Caco-2 (cell line): ENCODE measurements at regions of chr14 and their contacts with region 1.

Region 1: DNA sequence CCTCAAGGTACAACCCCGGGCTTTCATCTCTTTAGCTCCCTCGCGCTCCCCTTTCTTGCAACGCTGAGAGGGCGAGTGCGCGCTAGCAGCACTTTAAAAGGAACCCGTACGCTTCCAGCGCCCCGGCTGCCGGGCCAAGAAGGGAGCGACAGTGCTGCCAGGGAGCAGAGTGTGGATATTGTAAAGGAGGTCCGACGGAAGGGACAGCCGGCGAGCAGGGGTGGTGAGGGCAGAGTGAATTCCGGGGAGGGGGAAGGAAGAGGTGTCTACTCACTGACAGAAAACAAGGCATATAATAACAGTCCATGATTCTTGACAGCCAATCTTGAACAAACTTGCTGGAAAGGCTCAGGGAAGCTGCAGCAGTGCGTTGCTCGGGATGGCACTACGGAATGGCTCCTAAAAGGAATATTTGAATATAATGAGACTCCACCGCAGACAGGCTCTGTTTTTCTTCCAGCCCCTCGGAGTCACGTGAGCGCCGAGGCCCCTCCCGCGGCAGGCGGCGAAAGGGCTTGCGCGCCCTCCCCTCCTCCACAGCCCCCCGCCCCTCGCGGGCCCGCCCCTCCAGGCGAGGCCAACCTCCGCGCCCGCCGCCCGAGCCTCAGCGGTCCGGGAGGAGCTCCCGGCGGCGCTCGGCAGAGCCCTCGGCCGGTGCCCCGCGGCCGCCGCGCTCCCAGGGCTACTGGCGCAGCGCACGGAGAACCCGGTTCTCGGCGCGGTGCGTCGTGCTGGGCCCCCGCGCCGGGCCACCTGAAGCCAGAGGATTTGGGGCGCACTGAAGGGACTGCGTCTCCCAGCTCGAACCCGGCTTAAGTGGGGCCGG is 3.4 kb downstream of the BMP4 start:
- DNase-seq: peak; percentile 80 to 89
- H3K4me3 ChIP-seq: peak overlapping the region; percentile 51
- H3K4me3 Mint-ChIP-seq: peak overlapping the region; percentile 100
- H3K27ac Mint-ChIP-seq: peak overlapping the region; percentile 80
- H3K4me1 ChIP-seq: peaks cover 14% of the 10 kb centered on the region
- H3K4me1 Mint-ChIP-seq: peaks cover 10% of the 10 kb centered on the region
- H3K27me3 ChIP-seq: no peaks in the 10 kb centered on the region
- H3K27me3 Mint-ChIP-seq: no peaks in the 10 kb centered on the region
- CTCF ChIP-seq: no peak

Region 2: GRCh38 chr14:53444677-53445312 is 508.4 kb before region 1 on chr14:
- CTCF ChIA-PET with region 1: no interaction called
- POLR2A ChIA-PET with region 1: interaction called, 14 read pairs
- intact Hi-C with region 1: no loop called
- DNase-seq: no peak
- H3K4me3 ChIP-seq: no peak overlapping the region
- H3K4me3 Mint-ChIP-seq: no peak overlapping the region
- H3K27ac Mint-ChIP-seq: no peak overlapping the region
- H3K4me1 ChIP-seq: peaks cover 31% of the 10 kb centered on the region
- H3K4me1 Mint-ChIP-seq: peaks cover 37% of the 10 kb centered on the region
- H3K27me3 ChIP-seq: no peaks in the 10 kb centered on the region
- H3K27me3 Mint-ChIP-seq: no peaks in the 10 kb centered on the region
- CTCF ChIP-seq: no peak

Region 3: GRCh38 chr14:53478174-53478573 is 475.0 kb before region 1 on chr14:
- CTCF ChIA-PET with region 1: no interaction called
- POLR2A ChIA-PET with region 1: no interaction called
- intact Hi-C with region 1: no loop called
- DNase-seq: no peak
- H3K4me3 ChIP-seq: no peak overlapping the region
- H3K4me3 Mint-ChIP-seq: no peak overlapping the region
- H3K27ac Mint-ChIP-seq: no peak overlapping the region
- H3K4me1 ChIP-seq: no peaks in the 10 kb centered on the region
- H3K4me1 Mint-ChIP-seq: peaks cover 13% of the 10 kb centered on the region
- H3K27me3 ChIP-seq: no peaks in the 10 kb centered on the region
- H3K27me3 Mint-ChIP-seq: no peaks in the 10 kb centered on the region
- CTCF ChIP-seq: no peak

Region 4: DNA sequence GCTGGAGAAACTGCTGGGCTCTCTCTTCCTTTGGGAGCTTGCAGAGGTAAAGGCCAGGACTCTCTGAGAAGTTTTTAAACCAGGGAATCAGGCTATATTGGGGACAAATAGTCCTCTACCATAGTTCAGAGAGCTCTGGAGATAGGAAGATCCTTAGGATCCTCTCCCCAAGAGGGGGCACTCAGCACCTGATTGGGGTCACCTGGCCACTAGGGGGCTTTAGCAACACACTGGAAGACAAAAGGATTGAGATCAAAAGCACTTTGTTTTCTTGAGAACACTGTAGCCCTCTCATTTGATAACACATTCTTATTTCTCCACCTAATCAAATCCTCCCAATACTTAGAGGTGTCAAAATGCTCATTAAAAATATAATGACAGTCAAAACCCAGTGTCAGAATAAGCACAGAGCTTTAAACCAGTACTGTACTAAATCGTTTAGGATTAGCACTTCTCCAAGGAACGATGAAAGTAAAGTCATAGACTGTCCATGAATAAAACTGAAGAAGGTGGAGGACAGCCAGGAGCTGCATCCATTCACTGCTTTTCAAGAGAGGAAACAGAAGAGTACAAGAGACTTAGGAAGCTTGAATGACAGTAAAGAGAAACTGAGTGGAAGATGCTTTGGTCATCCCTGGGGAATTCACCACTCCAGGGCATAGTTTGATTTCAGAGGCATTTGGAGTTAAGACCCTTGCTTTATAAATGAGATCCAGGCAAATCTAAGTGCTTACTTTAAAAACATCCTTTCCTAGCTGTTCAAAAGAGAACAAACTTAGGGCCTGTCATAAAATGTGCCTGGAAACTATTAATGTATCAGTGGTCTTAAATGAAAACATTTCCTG is 23.1 kb before region 1 on chr14:
- CTCF ChIA-PET with region 1: interaction called, 9 read pairs
- POLR2A ChIA-PET with region 1: no interaction called
- intact Hi-C with region 1: loop called (anchors 1 kb)
- DNase-seq: peak; percentile 82 to 84
- H3K4me3 ChIP-seq: no peak overlapping the region
- H3K4me3 Mint-ChIP-seq: no peak overlapping the region
- H3K27ac Mint-ChIP-seq: peak overlapping the region; percentile 68
- H3K4me1 ChIP-seq: peaks cover 39% of the 10 kb centered on the region
- H3K4me1 Mint-ChIP-seq: peaks cover 37% of the 10 kb centered on the region
- H3K27me3 ChIP-seq: no peaks in the 10 kb centered on the region
- H3K27me3 Mint-ChIP-seq: no peaks in the 10 kb centered on the region
- CTCF ChIP-seq: peak; percentile 93 to 98

Region 5: DNA sequence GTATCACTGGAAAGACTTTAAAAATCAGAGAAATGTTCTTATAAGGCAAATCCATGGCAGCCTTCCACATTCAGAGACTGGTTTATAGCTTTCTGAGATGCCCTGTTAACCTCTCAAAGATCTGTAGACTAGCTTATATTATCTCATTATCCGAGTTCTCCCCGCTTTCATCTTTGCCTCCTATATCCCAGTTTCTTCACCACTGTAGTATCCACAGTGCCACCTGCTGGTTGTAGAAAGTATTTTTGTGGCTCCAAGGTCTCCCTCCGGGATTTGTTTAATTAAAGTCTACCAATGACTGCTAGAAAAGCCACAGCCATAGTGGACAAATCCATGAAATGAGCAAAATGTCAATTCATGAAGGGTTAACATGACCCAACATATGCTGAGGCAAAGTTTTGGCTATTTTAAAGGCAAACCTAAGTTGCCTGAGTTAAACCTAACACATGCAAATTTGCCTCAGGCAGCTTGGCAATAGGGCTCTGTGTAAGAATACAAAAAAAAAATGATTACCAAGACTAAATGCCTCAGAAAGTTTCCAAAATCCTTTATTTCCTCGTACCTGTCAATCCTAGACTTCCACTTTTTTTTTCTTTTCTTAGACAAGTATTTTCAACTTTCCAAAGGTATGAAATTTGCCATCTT is 222.2 kb after region 1 on chr14:
- CTCF ChIA-PET with region 1: interaction called, 8 read pairs
- POLR2A ChIA-PET with region 1: no interaction called
- intact Hi-C with region 1: loop called (anchors 1 kb)
- DNase-seq: peak; percentile 76 to 83
- H3K4me3 ChIP-seq: no peak overlapping the region
- H3K4me3 Mint-ChIP-seq: no peak overlapping the region
- H3K27ac Mint-ChIP-seq: no peak overlapping the region
- H3K4me1 ChIP-seq: peaks cover 47% of the 10 kb centered on the region
- H3K4me1 Mint-ChIP-seq: peaks cover 33% of the 10 kb centered on the region
- H3K27me3 ChIP-seq: no peaks in the 10 kb centered on the region
- H3K27me3 Mint-ChIP-seq: no peaks in the 10 kb centered on the region
- CTCF ChIP-seq: peak; percentile 72 to 78

Region 6: GRCh38 chr14:54338696-54339317 is 385.6 kb after region 1 on chr14:
- CTCF ChIA-PET with region 1: interaction called, 6 read pairs
- POLR2A ChIA-PET with region 1: no interaction called
- intact Hi-C with region 1: loop called (anchors 2 kb)
- DNase-seq: peak in 1 of 2 experiments; percentile 35
- H3K4me3 ChIP-seq: no peak overlapping the region
- H3K4me3 Mint-ChIP-seq: no peak overlapping the region
- H3K27ac Mint-ChIP-seq: no peak overlapping the region
- H3K4me1 ChIP-seq: no peaks in the 10 kb centered on the region
- H3K4me1 Mint-ChIP-seq: peaks cover 13% of the 10 kb centered on the region
- H3K27me3 ChIP-seq: no peaks in the 10 kb centered on the region
- H3K27me3 Mint-ChIP-seq: no peaks in the 10 kb centered on the region
- CTCF ChIP-seq: peak; percentile 27 to 70